ENCODE measurements at regions of chr9 and their contacts with region 1.

Region 1: DNA sequence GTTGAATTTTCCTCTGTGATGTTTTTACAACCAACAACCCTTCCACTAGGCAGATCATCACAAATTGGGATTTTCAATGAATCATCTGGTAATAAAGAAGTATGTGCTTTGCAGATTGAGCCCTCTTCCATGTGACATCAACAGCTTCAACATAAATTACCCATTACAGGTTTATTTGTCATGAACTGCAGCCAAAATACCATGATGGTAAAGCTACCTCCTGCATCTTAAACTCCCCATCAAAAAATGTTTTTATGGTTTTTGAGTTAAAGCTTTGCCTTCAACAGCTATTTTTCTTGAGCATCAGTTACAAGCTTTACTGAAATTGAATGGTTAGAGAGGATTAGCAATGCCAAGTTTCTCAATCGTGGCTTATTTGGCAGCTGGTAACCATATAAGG is 211.4 kb upstream of the TUSC1 start:
- DNase-seq: no peak
- ATAC-seq: no peak
- H3K4me3 Mint-ChIP-seq: no peak overlapping the region
- H3K27ac Mint-ChIP-seq: no peak overlapping the region
- H3K4me1 Mint-ChIP-seq: no peaks in the 10 kb centered on the region
- H3K27me3 Mint-ChIP-seq: no peaks in the 10 kb centered on the region

Region 2: DNA sequence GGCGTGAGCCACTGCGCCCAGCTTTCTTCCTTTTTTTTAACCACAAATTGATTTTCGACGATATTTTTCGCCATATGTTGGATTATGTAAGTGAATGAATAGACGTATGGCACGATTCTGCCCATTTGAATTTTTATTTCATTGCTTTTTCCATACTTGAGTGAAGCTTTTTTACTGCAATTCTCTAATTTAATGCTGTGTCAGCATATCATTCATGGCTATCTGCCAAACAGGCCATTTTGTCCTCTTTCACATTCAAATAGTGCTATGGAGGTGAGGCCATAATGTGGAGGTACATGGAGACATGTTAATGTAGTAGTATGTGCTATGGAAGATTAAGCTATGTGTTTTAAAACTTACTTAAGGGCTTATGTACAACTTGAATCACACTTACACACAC is 59.3 kb before region 1 on chr9:
- CTCF ChIA-PET with region 1: no interaction called
- POLR2A ChIA-PET with region 1: no interaction called
- intact Hi-C with region 1: loop called in 1 of 2 experiments (anchors 5 kb)
- DNase-seq: no peak
- ATAC-seq: no peak
- H3K4me3 Mint-ChIP-seq: no peak overlapping the region
- H3K27ac Mint-ChIP-seq: no peak overlapping the region
- H3K4me1 Mint-ChIP-seq: no peaks in the 10 kb centered on the region
- H3K27me3 Mint-ChIP-seq: no peaks in the 10 kb centered on the region